ENCODE measurements at regions of chr6 and their contacts with region 1.

Region 1: GRCh38 chr6:36786055-36786675 is 53.1 kb downstream of the CPNE5 start:
- DNase-seq: no peak
- H3K4me3 ChIP-seq: no peak overlapping the region
- H3K27ac ChIP-seq: no peak overlapping the region
- H3K4me1 ChIP-seq: no peaks in the 10 kb centered on the region
- H3K27me3 ChIP-seq: no peaks in the 10 kb centered on the region
- CTCF ChIP-seq: no peak
- POLR2A ChIP-seq: no peak

Region 2: GRCh38 chr6:35920793-35921732 is 865.1 kb before region 1 on chr6 and contains the start of gene SRPK1:
- intact Hi-C with region 1: no loop called
- DNase-seq: peak; percentile 74 to 87
- H3K4me3 ChIP-seq: peak within 1 kb of the TSS; percentile 78 to 80 (median 78)
- H3K27ac ChIP-seq: peak within 1 kb of the TSS; percentile 81 to 86
- H3K4me1 ChIP-seq: peaks cover 0 to 3% of the 10 kb centered on the region in 2 donors
- H3K27me3 ChIP-seq: no peaks in the 10 kb centered on the region
- CTCF ChIP-seq: no peak
- POLR2A ChIP-seq: peak; percentile 29
- total RNA-seq, gene SRPK1: 29.1 to 77.7 (median 61.3) TPM

Region 3: DNA sequence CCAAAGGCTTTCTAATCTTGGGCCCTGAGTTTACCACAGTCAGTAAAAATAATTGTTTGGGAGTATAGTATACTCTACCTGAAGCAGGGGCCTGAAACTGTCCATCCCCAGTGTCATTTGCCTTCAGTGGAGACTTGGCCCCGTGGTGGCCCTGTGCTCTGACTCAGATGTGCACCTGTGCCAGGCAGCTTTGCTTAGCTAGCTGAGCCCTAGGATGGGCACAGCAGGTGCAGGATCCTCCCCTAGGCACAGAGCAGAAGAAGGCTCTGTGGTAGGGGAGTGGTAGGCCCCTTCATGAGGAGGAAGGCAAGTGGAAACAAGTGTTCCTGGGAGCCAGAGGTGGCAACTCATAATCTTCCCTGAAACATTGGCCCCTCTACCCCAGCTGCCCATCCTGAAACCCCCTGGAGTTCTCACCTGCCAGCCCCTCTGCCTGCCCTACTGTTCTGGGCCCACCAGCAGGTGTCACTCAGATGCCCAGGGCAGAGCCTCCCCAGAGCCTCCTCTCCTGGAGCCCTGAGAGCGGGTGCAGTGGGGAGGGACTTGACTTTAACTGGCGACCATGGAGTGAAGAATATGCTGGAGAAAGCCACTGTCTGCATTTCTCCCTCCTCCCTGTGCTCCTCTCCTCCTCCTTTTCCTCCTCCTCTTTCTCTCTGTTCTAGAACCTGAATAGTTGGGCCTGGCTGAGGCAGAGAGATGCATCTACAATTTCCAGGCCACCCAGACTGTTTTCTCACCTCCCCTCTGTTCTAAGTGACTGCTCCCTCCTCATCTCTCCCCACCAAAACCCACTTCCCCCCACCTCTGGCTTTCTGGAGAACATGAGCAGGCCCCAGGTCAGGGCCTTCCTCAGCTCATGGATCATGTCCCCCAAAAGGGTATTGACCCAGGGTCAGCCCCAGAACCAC is 50.2 kb after region 1 on chr6:
- intact Hi-C with region 1: loop called (anchors 2 kb)
- DNase-seq: no peak
- H3K4me3 ChIP-seq: no peak overlapping the region
- H3K27ac ChIP-seq: no peak overlapping the region
- H3K4me1 ChIP-seq: peaks cover 5% of the 10 kb centered on the region in 2 donors
- H3K27me3 ChIP-seq: no peaks in the 10 kb centered on the region
- CTCF ChIP-seq: no peak
- POLR2A ChIP-seq: no peak

Region 4: GRCh38 chr6:37141281-37142049 is 355.3 kb after region 1 on chr6:
- intact Hi-C with region 1: no loop called
- DNase-seq: no peak
- H3K4me3 ChIP-seq: no peak overlapping the region
- H3K27ac ChIP-seq: peak overlapping the region in 1 of 2 donors; percentile 2
- H3K4me1 ChIP-seq: no peaks in the 10 kb centered on the region
- H3K27me3 ChIP-seq: no peaks in the 10 kb centered on the region
- CTCF ChIP-seq: no peak
- POLR2A ChIP-seq: no peak